ENCODE measurements at regions of chr2 and their contacts with region 1.

Region 1: DNA sequence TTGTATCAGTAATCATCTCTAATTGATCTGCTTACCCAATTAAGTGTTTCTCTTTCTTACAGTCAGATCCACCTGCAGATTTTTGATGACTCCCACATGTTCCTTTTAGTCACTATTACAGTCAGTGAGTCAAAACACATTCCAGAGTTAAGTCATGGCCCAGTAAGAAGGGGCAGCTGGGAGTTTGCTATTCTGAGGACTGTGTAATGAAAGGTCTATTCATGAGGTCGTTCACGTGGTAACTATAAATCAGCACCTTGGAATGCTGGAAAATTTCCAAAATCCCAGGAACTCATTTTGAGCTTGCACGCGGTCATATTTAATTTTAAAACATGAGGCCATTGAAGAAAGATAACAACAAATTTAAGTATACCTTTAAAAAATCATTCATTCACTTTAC is 252.5 kb downstream of the XIRP2 start:
- DNase-seq: peak in 1 of 2 donors; percentile 70
- H3K4me3 ChIP-seq: no peak overlapping the region
- H3K27ac ChIP-seq: no peak overlapping the region
- H3K4me1 ChIP-seq: no peaks in the 10 kb centered on the region
- H3K27me3 ChIP-seq: no peaks in the 10 kb centered on the region
- CTCF ChIP-seq: no peak

Region 2: GRCh38 chr2:167292430-167293171 is 151.8 kb after region 1 on chr2:
- intact Hi-C with region 1: loop called (anchors 5 kb)
- DNase-seq: peak; percentile 25 to 89
- H3K4me3 ChIP-seq: peak within 1 kb of the TSS; percentile 66 to 97
- H3K27ac ChIP-seq: peak within 1 kb of the TSS; percentile 77 to 87
- H3K4me1 ChIP-seq: peaks cover 3 to 7% of the 10 kb centered on the region in 2 donors
- H3K27me3 ChIP-seq: no peaks in the 10 kb centered on the region
- CTCF ChIP-seq: peak in 2 of 3 experiments; percentile 12 to 38